ENCODE measurements at regions of chr17 and their contacts with region 1.

Region 1: DNA sequence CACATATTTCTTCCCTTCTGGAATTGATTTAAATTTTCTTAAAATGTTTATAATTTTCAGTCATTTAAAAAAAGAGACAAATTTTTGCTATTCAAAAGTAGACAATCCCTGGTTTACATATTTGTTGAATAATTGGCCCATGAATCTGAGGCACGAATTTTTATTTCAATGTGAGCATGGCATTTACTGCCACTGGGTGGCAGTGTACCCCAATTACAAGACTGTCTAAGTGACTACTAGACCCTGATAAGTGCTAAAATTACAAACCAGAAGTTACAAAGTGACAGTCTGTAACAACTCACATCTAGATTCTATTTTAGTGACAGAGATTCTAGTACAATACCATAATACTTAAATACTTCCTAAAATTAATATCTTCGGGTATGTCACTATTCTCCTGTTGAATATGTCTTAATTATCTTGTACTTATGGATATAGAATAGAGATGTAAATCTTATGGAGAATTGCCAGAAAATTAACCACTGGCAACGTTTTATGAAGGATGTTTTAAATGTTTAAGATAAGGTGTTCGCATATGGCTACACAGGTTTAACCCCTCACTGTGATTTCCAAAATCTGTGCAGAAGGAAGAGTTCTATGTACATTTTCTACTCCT is 235.8 kb downstream of the MAP2K4 start:
- DNase-seq: peak; percentile 74
- H3K4me3 ChIP-seq: no peak overlapping the region
- H3K27ac ChIP-seq: peak overlapping the region; percentile 46 to 55 (median 49)
- H3K4me1 ChIP-seq: peaks cover 0 to 47% (median 35%) of the 10 kb centered on the region in 4 donors
- H3K27me3 ChIP-seq: no peaks in the 10 kb centered on the region
- CTCF ChIP-seq: peak; percentile 59 to 73 (median 64)
- EP300 ChIP-seq: no peak
- POLR2A ChIP-seq: no peak

Region 2: GRCh38 chr17:12180644-12181261 is 75.7 kb before region 1 on chr17:
- intact Hi-C with region 1: loop called (anchors 5 kb)
- DNase-seq: no peak
- H3K4me3 ChIP-seq: no peak overlapping the region
- H3K27ac ChIP-seq: peak overlapping the region; percentile 58 to 73 (median 64)
- H3K4me1 ChIP-seq: peaks cover 4 to 14% (median 8%) of the 10 kb centered on the region in 4 donors
- H3K27me3 ChIP-seq: no peaks in the 10 kb centered on the region
- CTCF ChIP-seq: peak; percentile 62 to 73 (median 70)
- EP300 ChIP-seq: no peak
- POLR2A ChIP-seq: no peak

Region 3: DNA sequence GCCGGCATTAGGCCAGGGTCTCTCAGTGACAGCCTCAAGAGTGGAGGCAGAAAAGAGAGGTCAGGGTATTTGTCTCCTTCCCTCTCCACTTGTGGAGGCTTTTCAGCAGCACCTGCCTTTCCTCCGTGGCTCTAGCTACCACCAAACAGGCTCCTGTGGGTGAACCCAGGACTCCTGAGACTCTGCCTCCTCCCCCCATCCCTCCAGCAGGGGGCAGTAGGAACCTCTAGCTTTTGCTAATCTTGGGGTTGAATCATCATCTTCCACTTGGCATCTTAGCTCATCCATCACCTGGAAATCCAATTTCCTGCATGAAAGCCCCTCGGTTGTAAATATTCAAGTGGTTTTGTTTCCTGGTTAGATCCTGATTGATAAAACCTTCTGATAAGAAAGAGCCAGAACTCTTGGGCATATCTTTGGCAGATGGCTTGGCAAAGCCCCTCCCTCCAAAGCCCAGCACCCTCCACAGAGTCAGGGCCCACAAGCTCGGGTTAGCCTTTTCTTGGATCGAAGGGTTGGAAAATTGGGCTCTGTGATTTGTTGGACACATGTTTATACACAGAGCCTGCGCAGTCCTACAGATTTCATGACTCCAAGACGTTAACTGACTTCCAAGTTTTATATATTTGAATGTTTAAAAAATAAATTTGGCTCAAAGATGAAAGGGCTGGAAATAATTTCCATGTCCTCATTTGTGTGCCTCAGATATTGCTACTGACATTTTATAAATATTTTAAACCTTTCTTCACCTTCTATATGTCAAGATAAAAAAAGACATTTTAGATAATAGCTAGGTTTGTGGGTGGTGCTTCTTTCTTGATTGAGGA is 86.3 kb after region 1 on chr17:
- intact Hi-C with region 1: loop called (anchors 5 kb)
- DNase-seq: no peak
- H3K4me3 ChIP-seq: no peak overlapping the region
- H3K27ac ChIP-seq: peak overlapping the region in 3 of 4 donors; percentile 0 to 53 (median 49)
- H3K4me1 ChIP-seq: peaks cover 0 to 20% (median 13%) of the 10 kb centered on the region in 4 donors
- H3K27me3 ChIP-seq: no peaks in the 10 kb centered on the region
- CTCF ChIP-seq: peak in 1 of 4 experiments; percentile 27
- EP300 ChIP-seq: no peak
- POLR2A ChIP-seq: no peak

Region 4: DNA sequence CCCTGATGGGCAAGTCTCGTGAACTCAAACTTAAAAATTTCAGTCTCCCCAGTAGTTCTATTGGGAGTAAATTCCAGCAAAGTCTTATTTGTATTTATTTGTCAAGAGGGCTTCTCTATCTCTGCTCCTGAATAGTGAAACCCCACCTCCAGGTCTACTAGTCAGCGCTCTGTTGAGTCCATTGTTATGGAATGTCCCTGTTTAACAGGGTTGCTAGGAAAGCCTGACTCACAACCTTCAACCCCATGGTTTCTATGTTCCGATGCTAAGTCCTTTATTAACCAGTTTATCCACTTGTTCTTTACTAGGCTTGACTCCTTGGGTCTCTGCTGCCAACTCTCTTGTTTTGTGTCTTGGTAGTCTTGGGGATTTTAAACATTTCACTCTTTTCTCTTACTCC is 158.5 kb after region 1 on chr17:
- intact Hi-C with region 1: loop called (anchors 10 kb)
- DNase-seq: no peak
- H3K4me3 ChIP-seq: no peak overlapping the region
- H3K27ac ChIP-seq: peak overlapping the region; percentile 69 to 86 (median 82)
- H3K4me1 ChIP-seq: peaks cover 0 to 68% (median 27%) of the 10 kb centered on the region in 4 donors
- H3K27me3 ChIP-seq: no peaks in the 10 kb centered on the region
- CTCF ChIP-seq: no peak
- EP300 ChIP-seq: peak in 1 of 4 donors; percentile 36
- POLR2A ChIP-seq: no peak

Region 5: GRCh38 chr17:12463102-12463501 is 206.6 kb after region 1 on chr17:
- intact Hi-C with region 1: loop called (anchors 10 kb)
- DNase-seq: peak; percentile 68
- H3K4me3 ChIP-seq: no peak overlapping the region
- H3K27ac ChIP-seq: peak overlapping the region; percentile 22 to 76 (median 73)
- H3K4me1 ChIP-seq: peaks cover 0 to 72% (median 44%) of the 10 kb centered on the region in 4 donors
- H3K27me3 ChIP-seq: no peaks in the 10 kb centered on the region
- CTCF ChIP-seq: no peak
- EP300 ChIP-seq: peak in 1 of 4 donors; percentile 71
- POLR2A ChIP-seq: no peak

Region 6: DNA sequence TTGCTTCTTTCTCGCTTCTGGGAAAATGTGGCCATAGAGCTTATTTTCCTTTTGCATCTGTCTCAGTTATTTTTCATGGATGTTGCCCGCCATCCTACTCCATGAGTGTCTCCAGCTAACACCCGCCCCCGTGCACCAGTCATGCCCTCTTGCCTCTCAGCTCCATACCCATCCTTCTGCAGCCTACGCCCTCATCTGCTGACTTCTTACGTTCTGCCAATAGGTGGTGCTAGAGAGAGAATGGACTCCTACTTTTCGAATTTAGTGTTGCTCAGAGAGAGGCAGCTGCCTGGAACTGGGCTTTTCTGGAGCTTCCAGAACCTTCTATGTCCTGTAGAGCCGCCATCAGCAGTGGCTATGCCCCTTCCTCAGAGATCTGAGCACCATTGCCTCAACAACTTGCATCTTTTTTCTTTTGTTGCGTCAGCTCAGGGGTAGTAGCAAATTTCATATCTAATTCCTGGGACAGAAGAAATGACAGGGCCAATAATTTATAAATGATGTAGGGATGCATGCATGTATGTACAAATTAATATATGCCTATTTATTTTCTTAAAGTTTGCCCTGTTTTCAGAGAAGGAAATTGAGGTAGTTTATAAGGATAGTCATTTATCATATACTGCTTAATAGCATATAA is 289.5 kb after region 1 on chr17:
- intact Hi-C with region 1: loop called (anchors 5 kb)
- DNase-seq: no peak
- H3K4me3 ChIP-seq: no peak overlapping the region
- H3K27ac ChIP-seq: no peak overlapping the region
- H3K4me1 ChIP-seq: peaks cover 0 to 39% (median 31%) of the 10 kb centered on the region in 4 donors
- H3K27me3 ChIP-seq: no peaks in the 10 kb centered on the region
- CTCF ChIP-seq: peak; percentile 12 to 63 (median 60)
- EP300 ChIP-seq: no peak
- POLR2A ChIP-seq: no peak

Region 7: DNA sequence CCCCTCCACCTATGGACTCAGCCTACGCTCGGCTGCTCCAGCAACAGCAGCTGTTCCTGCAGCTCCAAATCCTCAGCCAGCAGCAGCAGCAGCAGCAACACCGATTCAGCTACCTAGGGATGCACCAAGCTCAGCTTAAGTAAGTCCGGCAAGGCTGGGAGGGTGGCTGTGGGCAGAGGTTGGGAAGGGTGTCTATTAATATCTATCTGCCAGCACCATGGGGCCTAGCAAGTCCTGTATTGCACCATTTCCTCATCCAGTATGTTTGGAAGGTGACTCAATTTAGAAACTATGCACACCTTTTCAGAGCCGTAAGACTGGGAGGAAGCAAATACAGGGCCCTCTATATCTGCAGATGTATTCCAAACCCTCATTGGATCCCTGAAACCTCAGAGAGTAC is 487.8 kb after region 1 on chr17:
- intact Hi-C with region 1: loop called (anchors 5 kb)
- DNase-seq: no peak
- H3K4me3 ChIP-seq: no peak overlapping the region
- H3K27ac ChIP-seq: peak overlapping the region in 2 of 4 donors; percentile 19 to 32
- H3K4me1 ChIP-seq: peaks cover 0 to 15% (median 10%) of the 10 kb centered on the region in 4 donors
- H3K27me3 ChIP-seq: no peaks in the 10 kb centered on the region
- CTCF ChIP-seq: no peak
- EP300 ChIP-seq: no peak
- POLR2A ChIP-seq: no peak

Measured in sigmoid colon (tissue), 7 donors.